Transverse colon (tissue), 4 donors: ENCODE measurements at regions of chr4 and their contacts with region 1.

Region 1: DNA sequence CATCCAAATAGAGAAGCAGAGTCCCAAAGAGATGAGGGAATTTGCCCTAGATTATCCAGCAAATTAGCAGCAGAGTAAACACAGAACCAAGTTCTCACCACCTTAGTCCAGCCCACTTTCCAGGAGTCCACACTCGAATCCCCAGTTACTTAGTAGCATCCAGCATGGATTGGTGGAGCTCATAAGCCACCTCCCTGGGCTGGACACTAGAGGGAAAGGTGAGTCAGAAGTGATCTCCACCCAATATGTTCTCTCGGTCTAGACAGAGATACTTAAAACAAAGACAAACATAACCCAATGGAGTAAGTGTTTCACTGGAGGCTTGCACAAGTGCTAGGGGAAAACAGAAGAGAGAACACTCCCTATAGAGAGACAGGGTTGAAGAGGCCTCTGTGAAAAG is 105.1 kb upstream of the CPEB2 start:
- DNase-seq: no peak
- H3K4me3 ChIP-seq: no peak overlapping the region
- H3K27ac ChIP-seq: no peak overlapping the region
- H3K4me1 ChIP-seq: no peaks in the 10 kb centered on the region
- H3K27me3 ChIP-seq: no peaks in the 10 kb centered on the region
- CTCF ChIP-seq: no peak
- EP300 ChIP-seq: no peak
- POLR2A ChIP-seq: no peak

Region 2: GRCh38 chr4:14743601-14744000 is 153.6 kb before region 1 on chr4:
- in situ Hi-C with region 1: no loop called
- intact Hi-C with region 1: no loop called
- DNase-seq: no peak
- H3K4me3 ChIP-seq: no peak overlapping the region
- H3K27ac ChIP-seq: no peak overlapping the region
- H3K4me1 ChIP-seq: no peaks in the 10 kb centered on the region
- H3K27me3 ChIP-seq: no peaks in the 10 kb centered on the region
- CTCF ChIP-seq: no peak
- EP300 ChIP-seq: no peak
- POLR2A ChIP-seq: no peak

Region 3: DNA sequence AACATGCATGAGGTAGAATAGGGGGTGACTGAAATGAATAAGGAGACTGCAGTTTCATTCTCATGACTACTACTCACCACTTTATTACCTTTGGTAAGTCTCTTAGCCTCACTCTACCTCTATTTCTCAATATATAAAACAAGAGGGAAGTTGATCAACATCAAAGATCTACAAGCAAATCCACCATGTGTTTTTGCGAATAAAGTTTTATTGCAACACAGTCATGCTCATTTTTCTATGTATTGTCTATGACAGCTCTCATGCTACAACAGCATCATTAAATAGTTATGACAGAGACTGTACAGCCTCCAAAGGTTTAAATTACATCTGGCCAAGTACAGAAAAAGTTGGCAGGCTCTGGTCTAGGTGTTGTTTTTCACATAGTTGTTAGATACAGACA is 32.4 kb after region 1 on chr4:
- in situ Hi-C with region 1: no loop called
- intact Hi-C with region 1: loop called (anchors 1 kb)
- DNase-seq: no peak
- H3K4me3 ChIP-seq: no peak overlapping the region
- H3K27ac ChIP-seq: no peak overlapping the region
- H3K4me1 ChIP-seq: no peaks in the 10 kb centered on the region
- H3K27me3 ChIP-seq: no peaks in the 10 kb centered on the region
- CTCF ChIP-seq: no peak
- EP300 ChIP-seq: no peak
- POLR2A ChIP-seq: no peak

Region 4: GRCh38 chr4:14967982-14968381 is 70.8 kb after region 1 on chr4:
- in situ Hi-C with region 1: no loop called
- intact Hi-C with region 1: loop called (anchors 2 kb)
- DNase-seq: no peak
- H3K4me3 ChIP-seq: no peak overlapping the region
- H3K27ac ChIP-seq: no peak overlapping the region
- H3K4me1 ChIP-seq: no peaks in the 10 kb centered on the region
- H3K27me3 ChIP-seq: no peaks in the 10 kb centered on the region
- CTCF ChIP-seq: no peak
- EP300 ChIP-seq: no peak
- POLR2A ChIP-seq: no peak